ENCODE measurements at regions of chr9 and their contacts with region 1.

Region 1: GRCh38 chr9:126704873-126705766 is 91.4 kb downstream of the LMX1B start:
- DNase-seq: peak; percentile 87
- H3K4me3 Mint-ChIP-seq: peak overlapping the region; percentile 11
- H3K27ac Mint-ChIP-seq: no peak overlapping the region
- H3K4me1 Mint-ChIP-seq: peaks cover 19% of the 10 kb centered on the region
- H3K27me3 Mint-ChIP-seq: peaks cover 16% of the 10 kb centered on the region

Region 2: GRCh38 chr9:126722252-126723078 is 17.3 kb after region 1 on chr9:
- CTCF ChIA-PET with region 1: interaction called, 49 read pairs
- POLR2A ChIA-PET with region 1: no interaction called
- DNase-seq: peak; percentile 87
- H3K4me3 Mint-ChIP-seq: peak overlapping the region; percentile 89
- H3K27ac Mint-ChIP-seq: peak overlapping the region; percentile 99
- H3K4me1 Mint-ChIP-seq: peaks cover 49% of the 10 kb centered on the region
- H3K27me3 Mint-ChIP-seq: peaks cover 10% of the 10 kb centered on the region

Region 3: GRCh38 chr9:126752376-126752775 is 47.3 kb after region 1 on chr9:
- CTCF ChIA-PET with region 1: interaction called, 10 read pairs
- POLR2A ChIA-PET with region 1: no interaction called
- DNase-seq: no peak
- H3K4me3 Mint-ChIP-seq: no peak overlapping the region
- H3K27ac Mint-ChIP-seq: no peak overlapping the region
- H3K4me1 Mint-ChIP-seq: peaks cover 24% of the 10 kb centered on the region
- H3K27me3 Mint-ChIP-seq: peaks cover 6% of the 10 kb centered on the region

Region 4: DNA sequence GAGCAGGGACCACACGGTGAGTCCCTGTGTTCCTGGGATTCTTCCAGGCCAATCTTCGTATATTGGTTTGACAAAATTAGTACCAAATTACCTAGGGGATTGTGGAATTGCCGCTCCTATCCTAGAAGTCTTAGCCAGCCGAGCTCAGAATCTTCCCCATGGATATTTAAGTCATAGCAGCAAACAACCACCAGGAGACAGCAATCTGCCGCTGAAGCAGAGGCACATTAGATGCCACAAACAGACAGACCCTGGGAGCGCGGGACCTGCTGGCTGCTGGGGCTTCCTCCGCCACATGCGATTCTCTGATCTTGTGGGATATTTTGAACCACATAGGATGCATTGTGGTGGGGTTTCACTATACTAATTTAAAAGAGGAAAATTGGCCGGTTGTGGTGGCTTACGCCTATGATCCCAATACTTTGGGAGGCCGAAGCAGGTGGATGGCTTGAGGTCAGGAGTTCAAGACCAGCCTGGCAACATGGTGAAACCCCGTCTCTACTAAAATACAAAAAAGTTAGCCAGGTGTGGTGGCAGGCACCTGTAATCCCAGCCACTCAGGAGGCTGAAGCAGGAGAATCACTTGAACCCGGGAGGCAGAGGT is 68.0 kb after region 1 on chr9:
- CTCF ChIA-PET with region 1: interaction called, 195 read pairs
- POLR2A ChIA-PET with region 1: interaction called, 3 read pairs
- DNase-seq: peak; percentile 20
- H3K4me3 Mint-ChIP-seq: no peak overlapping the region
- H3K27ac Mint-ChIP-seq: no peak overlapping the region
- H3K4me1 Mint-ChIP-seq: peaks cover 1% of the 10 kb centered on the region
- H3K27me3 Mint-ChIP-seq: peaks cover 23% of the 10 kb centered on the region

Region 5: DNA sequence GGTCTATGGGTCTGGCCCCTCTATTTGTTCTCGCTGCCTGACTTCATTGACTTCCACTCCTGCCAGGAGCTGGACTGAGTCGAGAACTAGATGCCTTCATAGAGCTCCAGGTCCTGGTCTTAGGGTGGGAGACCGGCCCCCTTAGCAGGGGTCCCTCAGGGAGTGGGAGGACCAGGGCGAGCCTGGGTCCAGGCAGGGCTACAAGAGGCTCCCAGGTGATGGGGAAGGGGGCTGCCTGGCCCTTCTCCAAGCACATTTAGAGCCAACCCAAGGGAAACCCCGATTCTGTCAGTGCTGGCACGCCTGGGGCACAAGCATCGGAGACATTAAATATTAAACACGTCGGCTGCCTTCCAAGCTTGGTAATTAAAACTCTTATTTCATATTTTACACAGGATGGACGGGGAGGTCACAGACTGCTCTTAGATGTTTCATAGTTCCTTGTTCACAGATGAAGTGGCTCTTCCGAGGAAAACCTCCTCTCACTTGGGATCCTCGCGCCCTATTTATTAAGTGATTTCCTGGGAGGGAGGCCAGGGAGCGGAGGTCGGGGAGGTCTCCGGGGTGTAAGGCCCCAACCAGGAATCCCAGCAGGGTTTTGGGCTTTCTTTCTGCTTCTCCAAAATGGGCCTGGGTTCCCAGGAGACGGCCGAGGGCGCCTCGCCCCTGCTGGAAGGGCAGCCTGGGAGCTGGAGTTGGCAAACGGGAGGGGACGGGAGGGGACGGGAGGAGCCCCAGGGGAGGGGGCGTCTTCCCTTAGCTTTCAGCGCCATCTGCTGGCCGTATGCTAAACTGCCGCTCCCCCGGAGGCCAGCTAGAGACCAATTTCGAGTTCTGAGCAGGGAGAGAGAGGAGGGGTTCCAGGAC is 76.3 kb after region 1 on chr9:
- CTCF ChIA-PET with region 1: interaction called, 195 read pairs
- POLR2A ChIA-PET with region 1: interaction called, 3 read pairs
- DNase-seq: peak; percentile 82
- H3K4me3 Mint-ChIP-seq: no peak overlapping the region
- H3K27ac Mint-ChIP-seq: no peak overlapping the region
- H3K4me1 Mint-ChIP-seq: peaks cover 3% of the 10 kb centered on the region
- H3K27me3 Mint-ChIP-seq: peaks cover 3% of the 10 kb centered on the region